Activated T-helper 1 cell treated with anti-CD3 and anti-CD28 coated beads, Interleukin-12 subunit alpha, Interleukin-12 subunit beta, Interleukin-2, Interleukin-4 antibody, amounts not matched to agents 30 ng/mL and 10 ng/mL and 1 ng/mL, durations not matched to agents 14 hours and 24 hours and 36 hours (primary cell): ENCODE measurements at regions of chr5 and their contacts with region 1.

Region 1: DNA sequence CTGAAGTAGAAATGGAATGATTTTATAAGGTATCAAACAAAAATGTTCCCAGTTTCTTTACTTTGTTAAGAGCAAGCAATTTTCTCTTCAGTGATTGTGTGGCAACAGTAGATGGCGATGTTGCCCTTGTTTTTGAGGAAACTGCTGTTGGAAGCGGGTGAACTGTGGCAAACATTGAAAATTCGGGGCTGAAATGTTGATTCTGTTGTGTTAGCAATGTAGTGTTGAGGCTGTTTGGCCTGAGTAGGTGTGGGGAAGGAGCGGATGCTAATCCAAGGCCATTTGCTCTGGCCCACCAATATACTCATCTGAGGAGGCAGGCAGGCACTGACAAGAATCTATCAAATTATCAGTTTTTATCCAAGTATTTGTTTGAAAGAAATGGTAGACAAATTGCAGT is 129.8 kb downstream of the SLC12A2 start:
- DNase-seq: peak; percentile 14
- H3K4me3 Mint-ChIP-seq: no peak overlapping the region
- H3K27ac Mint-ChIP-seq: no peak overlapping the region
- H3K4me1 Mint-ChIP-seq: no peaks in the 10 kb centered on the region
- H3K27me3 Mint-ChIP-seq: peaks cover 3% of the 10 kb centered on the region

Region 2: GRCh38 chr5:128498844-128499455 is 285.6 kb after region 1 on chr5:
- intact Hi-C with region 1: loop called (anchors 2 kb)
- DNase-seq: no peak
- H3K4me3 Mint-ChIP-seq: no peak overlapping the region
- H3K27ac Mint-ChIP-seq: no peak overlapping the region
- H3K4me1 Mint-ChIP-seq: no peaks in the 10 kb centered on the region
- H3K27me3 Mint-ChIP-seq: no peaks in the 10 kb centered on the region

Region 3: DNA sequence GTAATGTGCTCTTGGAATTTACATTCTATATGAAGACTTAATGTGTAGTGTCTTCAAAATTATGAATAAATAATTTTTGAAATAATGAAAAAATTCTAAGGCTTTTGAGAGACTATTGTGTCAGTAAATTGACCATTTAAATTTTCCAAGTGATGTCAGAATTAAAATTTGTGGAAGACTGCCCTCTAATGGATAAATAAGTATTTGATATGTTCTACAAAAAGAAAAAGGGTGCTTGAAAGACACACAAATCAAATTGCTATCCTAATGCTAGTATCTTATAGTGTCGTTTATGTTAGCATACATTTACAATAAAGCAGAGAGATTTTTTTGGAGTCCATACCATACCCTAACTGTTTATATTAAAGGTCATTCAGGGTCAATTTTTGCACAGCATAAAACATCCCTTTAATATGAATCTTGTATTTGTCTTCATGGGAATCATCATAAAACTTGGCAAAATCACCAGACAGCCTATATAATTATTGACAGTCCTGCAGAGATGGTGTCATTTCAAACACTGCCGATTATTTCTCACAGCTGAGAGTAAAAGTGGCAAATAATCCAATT is 631.1 kb after region 1 on chr5:
- intact Hi-C with region 1: loop called (anchors 5 kb)
- DNase-seq: no peak
- H3K4me3 Mint-ChIP-seq: no peak overlapping the region
- H3K27ac Mint-ChIP-seq: no peak overlapping the region
- H3K4me1 Mint-ChIP-seq: no peaks in the 10 kb centered on the region
- H3K27me3 Mint-ChIP-seq: no peaks in the 10 kb centered on the region

Region 4: DNA sequence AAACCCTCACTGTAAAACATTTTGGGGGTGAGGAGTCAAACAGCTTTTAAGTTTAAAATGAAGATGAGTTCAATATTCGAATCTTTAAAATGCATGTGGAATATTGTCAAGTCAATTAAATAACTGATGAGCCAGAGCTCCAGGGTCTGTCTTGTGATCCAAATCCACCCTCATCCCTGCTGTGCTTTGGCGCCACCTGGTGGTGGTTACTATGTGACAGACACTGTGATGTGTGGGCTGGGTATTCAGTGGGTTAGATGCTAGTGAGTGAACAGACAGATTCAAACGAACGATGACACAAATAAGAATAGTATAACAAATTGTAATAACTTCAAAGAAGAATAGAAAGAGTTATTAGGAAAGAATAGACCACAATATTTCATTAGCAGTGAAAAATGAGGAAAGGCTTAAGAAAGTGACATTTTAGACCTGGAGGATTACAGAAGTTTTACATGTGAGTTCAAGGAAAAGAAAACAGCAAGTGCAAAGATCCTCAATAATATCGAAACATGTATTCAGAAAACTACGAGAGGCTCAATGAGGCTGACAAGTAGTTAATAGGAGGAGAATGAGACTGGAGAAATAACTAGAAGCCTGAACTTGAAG is 1639.5 kb after region 1 on chr5:
- intact Hi-C with region 1: loop called (anchors 2 kb)
- DNase-seq: peak; percentile 35
- H3K4me3 Mint-ChIP-seq: no peak overlapping the region
- H3K27ac Mint-ChIP-seq: no peak overlapping the region
- H3K4me1 Mint-ChIP-seq: no peaks in the 10 kb centered on the region
- H3K27me3 Mint-ChIP-seq: peaks cover 2% of the 10 kb centered on the region